Transverse colon (tissue), 4 donors: ENCODE measurements at regions of chr2 and their contacts with region 1.

Region 1: GRCh38 chr2:26846328-26847306 is 1.3 kb upstream of the DPYSL5 start:
- DNase-seq: peak; percentile 57
- H3K4me3 ChIP-seq: no peak overlapping the region
- H3K27ac ChIP-seq: no peak overlapping the region
- H3K4me1 ChIP-seq: peaks cover 23 to 35% (median 29%) of the 10 kb centered on the region in 4 donors
- H3K27me3 ChIP-seq: peaks cover 100% of the 10 kb centered on the region
- CTCF ChIP-seq: peak; percentile 63 to 72 (median 68)
- EP300 ChIP-seq: no peak
- POLR2A ChIP-seq: no peak

Region 2: GRCh38 chr2:26577434-26578112 is 269.0 kb before region 1 on chr2:
- in situ Hi-C with region 1: no loop called
- intact Hi-C with region 1: no loop called
- DNase-seq: peak; percentile 67
- H3K4me3 ChIP-seq: no peak overlapping the region
- H3K27ac ChIP-seq: no peak overlapping the region
- H3K4me1 ChIP-seq: no peaks in the 10 kb centered on the region
- H3K27me3 ChIP-seq: no peaks in the 10 kb centered on the region
- CTCF ChIP-seq: peak; percentile 85 to 98 (median 98)
- EP300 ChIP-seq: no peak
- POLR2A ChIP-seq: no peak

Region 3: GRCh38 chr2:26922405-26923188 is 76.0 kb after region 1 on chr2:
- in situ Hi-C with region 1: loop called in 1 of 4 experiments (anchors 10 kb)
- intact Hi-C with region 1: no loop called
- DNase-seq: peak; percentile 28
- H3K4me3 ChIP-seq: no peak overlapping the region
- H3K27ac ChIP-seq: no peak overlapping the region
- H3K4me1 ChIP-seq: no peaks in the 10 kb centered on the region
- H3K27me3 ChIP-seq: peaks cover 17% of the 10 kb centered on the region
- CTCF ChIP-seq: peak; percentile 24 to 46 (median 35)
- EP300 ChIP-seq: no peak
- POLR2A ChIP-seq: no peak

Region 4: GRCh38 chr2:26942543-26943295 is 96.1 kb after region 1 on chr2:
- in situ Hi-C with region 1: loop called in 2 of 4 experiments (anchors 10 kb)
- intact Hi-C with region 1: loop called (anchors 5 kb)
- DNase-seq: peak; percentile 66
- H3K4me3 ChIP-seq: no peak overlapping the region
- H3K27ac ChIP-seq: no peak overlapping the region
- H3K4me1 ChIP-seq: peaks cover 0 to 8% (median 0%) of the 10 kb centered on the region in 4 donors
- H3K27me3 ChIP-seq: peaks cover 28% of the 10 kb centered on the region
- CTCF ChIP-seq: peak; percentile 67 to 81 (median 78)
- EP300 ChIP-seq: no peak
- POLR2A ChIP-seq: no peak